Dendritic cell treated with granulocyte-macrophage colony-stimulating factor and Interleukin-4, amounts not matched to agents 40 ng/mL and 50 ng/mL, for 4 days (primary cell): ENCODE measurements at regions of chr1 and their contacts with region 1.

Region 1: GRCh38 chr1:156797212-156797871 is 19.3 kb downstream of the SH2D2A start:
- H3K4me3 Mint-ChIP-seq: no peak overlapping the region
- H3K27ac Mint-ChIP-seq: no peak overlapping the region
- H3K4me1 Mint-ChIP-seq: peaks cover 14% of the 10 kb centered on the region
- H3K27me3 Mint-ChIP-seq: no peaks in the 10 kb centered on the region

Region 2: GRCh38 chr1:156813750-156814570 is 16.6 kb after region 1 on chr1:
- intact Hi-C with region 1: no loop called
- H3K4me3 Mint-ChIP-seq: peak overlapping the region; percentile 70
- H3K27ac Mint-ChIP-seq: peak overlapping the region; percentile 71
- H3K4me1 Mint-ChIP-seq: peaks cover 61% of the 10 kb centered on the region
- H3K27me3 Mint-ChIP-seq: peaks cover 64% of the 10 kb centered on the region

Region 3: GRCh38 chr1:156860113-156860627 is 62.8 kb after region 1 on chr1:
- intact Hi-C with region 1: loop called (anchors 2 kb)
- H3K4me3 Mint-ChIP-seq: peak overlapping the region; percentile 44
- H3K27ac Mint-ChIP-seq: no peak overlapping the region
- H3K4me1 Mint-ChIP-seq: peaks cover 28% of the 10 kb centered on the region
- H3K27me3 Mint-ChIP-seq: peaks cover 84% of the 10 kb centered on the region

Region 4: GRCh38 chr1:156927215-156928042 is 130.1 kb after region 1 on chr1:
- intact Hi-C with region 1: loop called (anchors 5 kb)
- H3K4me3 Mint-ChIP-seq: no peak overlapping the region
- H3K27ac Mint-ChIP-seq: peak overlapping the region; percentile 41
- H3K4me1 Mint-ChIP-seq: peaks cover 52% of the 10 kb centered on the region
- H3K27me3 Mint-ChIP-seq: peaks cover 80% of the 10 kb centered on the region